ENCODE measurements at regions of chr2 and their contacts with region 1.

Region 1: DNA sequence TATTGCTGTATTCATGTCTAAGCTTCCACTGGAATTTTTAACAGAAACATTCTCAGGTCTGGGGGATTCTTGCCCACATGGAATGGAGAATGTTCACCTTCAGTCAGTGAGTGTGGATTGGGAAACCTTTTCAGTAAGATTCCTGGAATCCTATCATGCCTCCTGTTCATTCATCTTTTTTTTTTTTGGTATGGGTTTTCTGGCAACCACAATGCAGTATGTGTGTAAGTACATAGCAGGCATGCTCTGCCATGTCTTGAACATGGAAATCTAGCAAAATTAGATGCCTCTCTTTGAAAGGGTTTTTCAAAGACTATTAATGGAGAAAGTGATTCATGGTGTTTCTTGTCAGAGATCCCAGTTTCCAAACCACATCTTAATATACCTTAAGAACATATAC is 176.5 kb downstream of the LTBP1 start:
- DNase-seq: no peak
- ATAC-seq: no peak
- H3K4me3 ChIP-seq: no peak overlapping the region
- H3K4me3 Mint-ChIP-seq: no peak overlapping the region
- H3K27ac ChIP-seq: no peak overlapping the region
- H3K27ac Mint-ChIP-seq: no peak overlapping the region
- H3K4me1 ChIP-seq: no peaks in the 10 kb centered on the region
- H3K4me1 Mint-ChIP-seq: no peaks in the 10 kb centered on the region
- H3K27me3 ChIP-seq: no peaks in the 10 kb centered on the region
- H3K27me3 Mint-ChIP-seq: peaks cover 6% of the 10 kb centered on the region
- CTCF ChIP-seq: no peak

Region 2: DNA sequence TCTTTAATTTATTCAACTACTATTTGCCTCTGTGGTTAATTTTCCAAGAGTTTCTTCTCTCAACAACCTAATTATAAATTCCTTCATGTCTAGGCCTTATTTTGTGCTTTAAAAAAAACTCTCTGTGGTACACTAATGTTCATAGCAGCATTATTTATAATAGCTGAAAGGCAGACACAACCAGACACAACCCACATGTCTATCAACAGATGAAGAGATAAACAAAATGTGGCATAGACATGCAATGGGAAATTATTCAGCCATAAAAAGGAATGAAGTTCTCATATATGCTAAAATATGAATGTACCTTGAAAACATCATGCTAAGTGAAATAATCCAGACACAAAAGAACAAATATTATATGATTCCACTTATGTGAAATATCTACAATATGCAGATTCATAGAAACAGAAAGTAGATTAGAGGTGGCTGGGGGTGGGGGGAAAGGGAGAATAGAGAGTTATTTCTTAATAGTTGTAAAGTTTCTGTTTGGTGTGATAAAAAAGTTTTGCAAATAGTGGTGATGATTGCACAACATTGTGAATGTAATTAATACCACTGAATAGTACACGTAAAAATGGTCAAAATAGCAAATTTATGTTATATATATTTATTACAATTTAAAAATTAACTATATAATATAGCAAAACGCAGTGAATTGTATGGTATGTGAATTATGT is 325.1 kb after region 1 on chr2:
- CTCF ChIA-PET with region 1: no interaction called
- POLR2A ChIA-PET with region 1: no interaction called
- intact Hi-C with region 1: no loop called
- DNase-seq: no peak
- ATAC-seq: no peak
- H3K4me3 ChIP-seq: no peak overlapping the region
- H3K4me3 Mint-ChIP-seq: no peak overlapping the region
- H3K27ac ChIP-seq: no peak overlapping the region
- H3K27ac Mint-ChIP-seq: no peak overlapping the region
- H3K4me1 ChIP-seq: no peaks in the 10 kb centered on the region
- H3K4me1 Mint-ChIP-seq: no peaks in the 10 kb centered on the region
- H3K27me3 ChIP-seq: no peaks in the 10 kb centered on the region
- H3K27me3 Mint-ChIP-seq: no peaks in the 10 kb centered on the region
- CTCF ChIP-seq: no peak

Region 3: DNA sequence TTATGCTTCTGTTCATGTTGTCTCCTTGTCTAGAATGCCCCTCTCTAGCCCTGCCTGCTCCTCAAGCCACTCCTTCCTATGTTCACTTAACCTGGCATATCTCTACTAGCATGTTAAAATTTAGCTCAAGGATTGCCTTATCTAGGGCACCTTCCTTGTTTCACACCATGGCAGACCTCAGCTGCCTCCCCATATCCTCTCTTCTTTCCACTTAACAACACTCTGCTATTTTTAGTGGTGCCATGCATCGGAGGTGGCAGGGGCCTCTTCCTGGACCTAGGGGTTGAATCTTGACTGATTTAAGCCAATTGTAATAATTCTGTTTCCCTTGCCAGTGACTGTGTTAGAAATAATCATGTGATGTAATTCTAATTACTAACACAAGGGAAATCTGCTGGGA is 512.8 kb after region 1 on chr2:
- CTCF ChIA-PET with region 1: no interaction called
- POLR2A ChIA-PET with region 1: no interaction called
- intact Hi-C with region 1: loop called in 1 of 2 experiments (anchors 5 kb)
- DNase-seq: no peak
- ATAC-seq: no peak
- H3K4me3 ChIP-seq: no peak overlapping the region
- H3K4me3 Mint-ChIP-seq: no peak overlapping the region
- H3K27ac ChIP-seq: no peak overlapping the region
- H3K27ac Mint-ChIP-seq: no peak overlapping the region
- H3K4me1 ChIP-seq: no peaks in the 10 kb centered on the region
- H3K4me1 Mint-ChIP-seq: no peaks in the 10 kb centered on the region
- H3K27me3 ChIP-seq: no peaks in the 10 kb centered on the region
- H3K27me3 Mint-ChIP-seq: no peaks in the 10 kb centered on the region
- CTCF ChIP-seq: no peak